ENCODE measurements at regions of chr20 and their contacts with region 1.

Region 1: DNA sequence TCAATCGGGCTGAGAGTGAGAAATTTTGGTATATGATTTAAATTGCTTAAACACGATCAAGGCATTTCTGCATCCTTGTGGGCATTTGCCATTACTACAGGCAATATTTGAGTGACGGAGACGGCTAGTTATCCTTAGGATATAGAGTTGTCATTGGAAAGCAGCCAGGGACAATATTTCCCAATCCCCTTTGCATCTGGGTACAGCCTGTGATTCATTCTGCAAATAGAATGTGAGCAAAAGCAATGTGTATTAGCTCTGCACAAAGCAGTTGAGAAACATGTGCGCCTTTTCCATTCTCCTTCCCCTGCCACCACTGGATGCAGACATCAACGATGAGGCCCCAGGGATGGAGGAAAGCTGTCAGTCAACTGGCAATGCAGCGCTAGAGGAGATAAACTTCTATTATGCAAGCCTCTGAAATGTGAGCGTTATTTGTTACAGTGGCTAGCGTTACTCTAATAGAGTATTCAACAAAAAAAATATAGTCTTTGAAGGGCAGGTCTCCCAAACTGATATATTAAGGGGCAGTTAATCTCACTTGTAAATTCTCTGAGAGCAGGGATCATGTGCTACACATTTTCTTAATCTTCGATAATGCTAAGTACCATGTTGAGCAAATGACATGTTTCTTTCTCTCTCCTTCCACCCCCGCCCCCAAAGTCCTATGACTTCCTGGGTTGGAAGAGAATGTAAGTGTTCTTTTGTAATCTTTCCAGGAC is 37.1 kb upstream of the NCOA3 start:
- DNase-seq: peak; percentile 96
- H3K4me3 ChIP-seq: no peak overlapping the region
- H3K27ac ChIP-seq: peak overlapping the region; percentile 38
- H3K4me1 ChIP-seq: peaks cover 20% of the 10 kb centered on the region
- H3K27me3 ChIP-seq: no peaks in the 10 kb centered on the region
- CTCF ChIP-seq: peak; percentile 56 to 59

Region 2: DNA sequence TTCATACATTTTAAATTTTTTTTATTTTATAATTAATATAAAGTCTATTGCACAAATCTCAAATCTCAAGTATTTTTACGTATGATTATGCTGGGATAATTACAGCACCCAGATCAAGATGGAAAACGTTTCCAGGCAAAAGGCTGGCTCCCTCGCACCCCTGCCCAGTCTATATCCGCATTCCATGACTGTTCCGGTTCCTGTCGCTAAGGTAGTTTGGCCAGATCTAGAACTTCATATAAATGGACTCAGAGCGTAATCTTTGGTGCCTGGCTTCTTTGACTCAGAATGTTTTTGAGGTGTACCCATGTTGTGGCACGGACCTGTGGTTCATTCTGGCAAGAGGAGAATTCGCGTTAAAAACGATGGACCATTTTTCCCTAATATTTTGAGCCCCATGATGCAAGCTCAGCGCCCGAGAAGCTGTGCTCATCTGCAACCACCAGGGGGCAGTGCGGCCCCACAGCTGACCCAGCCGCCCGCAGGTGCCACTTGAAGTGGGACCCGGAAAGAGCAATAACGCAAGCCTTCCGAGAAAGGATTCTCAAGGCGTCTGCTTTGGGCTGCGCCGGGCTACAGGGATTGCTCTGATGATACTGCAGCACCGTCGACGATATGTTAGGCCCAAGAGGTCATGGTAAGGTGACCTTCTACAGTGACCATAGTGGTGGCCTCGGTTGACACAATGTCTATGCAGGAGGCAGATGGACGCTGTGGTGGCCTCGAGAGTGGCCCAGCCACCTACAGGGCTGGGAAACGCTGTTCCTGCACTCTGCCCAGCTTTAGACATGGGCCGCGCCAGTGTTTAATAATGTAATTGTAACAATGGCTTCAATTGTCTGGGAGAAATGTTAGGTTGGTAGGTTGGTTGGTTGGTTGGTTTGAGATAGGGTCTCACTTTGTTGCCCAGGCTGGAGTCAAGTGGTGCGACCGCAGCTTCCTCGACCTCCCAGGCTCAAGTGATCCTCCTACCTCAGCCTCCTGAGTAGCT is 268.2 kb before region 1 on chr20:
- CTCF ChIA-PET with region 1: no interaction called
- dilution Hi-C with region 1: no loop called
- in situ Hi-C with region 1: no loop called
- intact Hi-C with region 1: loop called (anchors 5 kb)
- DNase-seq: peak; percentile 47
- H3K4me3 ChIP-seq: no peak overlapping the region
- H3K27ac ChIP-seq: no peak overlapping the region
- H3K4me1 ChIP-seq: peaks cover 10% of the 10 kb centered on the region
- H3K27me3 ChIP-seq: no peaks in the 10 kb centered on the region
- CTCF ChIP-seq: peak; percentile 86 to 96

Region 3: DNA sequence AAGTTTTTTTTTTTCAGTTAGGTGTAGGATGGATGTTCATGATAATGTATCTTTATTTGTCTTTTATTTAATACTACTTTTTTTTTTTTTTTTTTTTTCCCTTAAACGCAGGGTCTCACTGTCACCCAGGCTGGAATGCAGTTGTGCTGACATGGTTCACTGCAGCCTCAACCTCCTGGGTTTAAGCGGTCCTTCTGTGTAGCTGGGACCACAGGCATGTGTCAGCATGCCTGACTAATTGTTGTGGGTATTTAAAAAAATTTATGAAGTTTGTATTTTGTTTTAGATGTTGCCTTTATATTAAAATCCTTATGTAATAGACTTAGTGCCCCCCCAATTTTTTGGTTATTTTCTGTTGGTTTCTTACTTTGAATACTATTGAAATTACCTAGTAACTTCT is 79.7 kb after region 1 on chr20:
- CTCF ChIA-PET with region 1: no interaction called
- dilution Hi-C with region 1: no loop called
- in situ Hi-C with region 1: no loop called
- intact Hi-C with region 1: no loop called
- DNase-seq: peak; percentile 36
- H3K4me3 ChIP-seq: no peak overlapping the region
- H3K27ac ChIP-seq: no peak overlapping the region
- H3K4me1 ChIP-seq: peaks cover 9% of the 10 kb centered on the region
- H3K27me3 ChIP-seq: no peaks in the 10 kb centered on the region
- CTCF ChIP-seq: no peak

Region 4: GRCh38 chr20:49028684-49029083 is 1564.1 kb after region 1 on chr20:
- CTCF ChIA-PET with region 1: no interaction called
- dilution Hi-C with region 1: no loop called
- in situ Hi-C with region 1: no loop called
- intact Hi-C with region 1: no loop called
- DNase-seq: peak; percentile 13
- H3K4me3 ChIP-seq: no peak overlapping the region
- H3K27ac ChIP-seq: no peak overlapping the region
- H3K4me1 ChIP-seq: no peaks in the 10 kb centered on the region
- H3K27me3 ChIP-seq: no peaks in the 10 kb centered on the region
- CTCF ChIP-seq: peak; percentile 26 to 49

Measured in mammary epithelial cell (primary cell).